AG04450 (cell line): ENCODE measurements at regions of chr17 and their contacts with region 1.

Region 1: GRCh38 chr17:43393944-43394482 is 4.8 kb upstream of the ARL4D start:
- DNase-seq: peak; percentile 74
- H3K4me3 ChIP-seq: no peak overlapping the region
- H3K27ac ChIP-seq: no peak overlapping the region
- H3K27me3 ChIP-seq: no peaks in the 10 kb centered on the region
- CTCF ChIP-seq: peak; percentile 94

Region 2: GRCh38 chr17:43367737-43368242 is 26.2 kb before region 1 on chr17:
- CTCF ChIA-PET with region 1: no interaction called
- POLR2A ChIA-PET with region 1: interaction called, 91 read pairs
- DNase-seq: peak; percentile 97
- H3K4me3 ChIP-seq: peak overlapping the region; percentile 35
- H3K27ac ChIP-seq: peak overlapping the region; percentile 97
- H3K27me3 ChIP-seq: no peaks in the 10 kb centered on the region
- CTCF ChIP-seq: no peak

Region 3: GRCh38 chr17:43418441-43419374 is 24.7 kb after region 1 on chr17:
- CTCF ChIA-PET with region 1: interaction called, 7 read pairs
- POLR2A ChIA-PET with region 1: interaction called, 23 read pairs
- DNase-seq: peak; percentile 59
- H3K4me3 ChIP-seq: no peak overlapping the region
- H3K27ac ChIP-seq: peak overlapping the region; percentile 68
- H3K27me3 ChIP-seq: peaks cover 2% of the 10 kb centered on the region
- CTCF ChIP-seq: 0 out of 2 replicates have a peak, but pooled peaks have one; percentile 5

Region 4: GRCh38 chr17:43467981-43468581 is 74.1 kb after region 1 on chr17:
- CTCF ChIA-PET with region 1: interaction called, 18 read pairs
- POLR2A ChIA-PET with region 1: interaction called, 15 read pairs
- DNase-seq: no peak
- H3K4me3 ChIP-seq: no peak overlapping the region
- H3K27ac ChIP-seq: no peak overlapping the region
- H3K27me3 ChIP-seq: no peaks in the 10 kb centered on the region
- CTCF ChIP-seq: no peak